ENCODE measurements at regions of chr14 and their contacts with region 1.

Region 1: GRCh38 chr14:52313903-52314594 is at the start of gene PTGER2:
- DNase-seq: peak; percentile 95
- ATAC-seq: peak; percentile 83
- H3K4me3 Mint-ChIP-seq: peak within 1 kb of the TSS; percentile 97
- H3K27ac Mint-ChIP-seq: peak within 1 kb of the TSS; percentile 98
- H3K4me1 Mint-ChIP-seq: peaks cover 55% of the 10 kb centered on the region
- H3K27me3 Mint-ChIP-seq: no peaks in the 10 kb centered on the region
- total RNA-seq, gene PTGER2: 116 to 119 TPM

Region 2: GRCh38 chr14:52154992-52155650 is 158.9 kb before region 1 on chr14:
- CTCF ChIA-PET with region 1: no interaction called
- POLR2A ChIA-PET with region 1: no interaction called
- DNase-seq: peak; percentile 72
- ATAC-seq: peak; percentile 86
- H3K4me3 Mint-ChIP-seq: peak overlapping the region; percentile 53
- H3K27ac Mint-ChIP-seq: peak overlapping the region; percentile 85
- H3K4me1 Mint-ChIP-seq: peaks cover 58% of the 10 kb centered on the region
- H3K27me3 Mint-ChIP-seq: no peaks in the 10 kb centered on the region

Region 3: GRCh38 chr14:52325126-52325525 is 11.1 kb after region 1 on chr14:
- CTCF ChIA-PET with region 1: interaction called, 8 read pairs
- POLR2A ChIA-PET with region 1: interaction called, 32 read pairs
- DNase-seq: peak; percentile 59
- ATAC-seq: peak; percentile 90
- H3K4me3 Mint-ChIP-seq: peak overlapping the region; percentile 46
- H3K27ac Mint-ChIP-seq: peak overlapping the region; percentile 83
- H3K4me1 Mint-ChIP-seq: peaks cover 95% of the 10 kb centered on the region
- H3K27me3 Mint-ChIP-seq: no peaks in the 10 kb centered on the region